ENCODE measurements at regions of chr10 and their contacts with region 1.

Region 1: DNA sequence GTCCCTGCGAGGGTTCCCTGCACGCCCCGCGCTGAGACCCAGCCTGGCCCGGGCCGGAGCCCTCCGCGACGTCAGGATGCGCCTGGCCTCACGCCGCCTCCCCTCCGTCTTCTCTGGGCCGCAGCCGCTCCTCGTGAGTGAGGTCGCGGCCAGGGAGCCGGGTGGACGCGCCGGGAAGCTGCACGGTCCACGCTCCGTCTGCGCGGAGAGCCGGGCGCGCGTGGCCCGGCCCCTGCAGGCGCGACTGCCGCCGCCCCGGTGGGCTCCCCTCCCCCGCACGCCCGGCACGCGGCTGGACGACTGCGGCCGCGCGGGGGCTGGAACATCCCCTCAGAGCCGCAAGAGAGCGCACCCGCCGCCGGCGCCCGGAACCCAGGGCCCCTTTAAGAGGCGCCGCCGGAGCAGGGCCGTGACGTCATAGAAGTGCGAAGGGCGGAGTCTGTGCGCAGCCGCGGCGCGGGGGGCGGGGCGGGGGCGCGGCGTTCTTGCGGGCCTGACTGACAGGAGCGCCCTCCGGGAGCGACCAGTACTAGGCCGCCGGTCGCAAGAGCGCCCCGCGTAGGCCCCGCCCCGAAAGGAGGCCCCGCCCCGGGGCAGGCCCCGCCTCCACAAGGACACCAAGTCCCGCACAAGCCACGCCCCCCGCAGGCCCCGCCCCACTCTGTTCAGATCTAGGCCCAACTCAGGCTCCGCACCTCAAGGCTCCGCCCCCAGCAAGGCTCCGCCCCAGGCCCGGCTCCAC is 445 bp upstream of the INPP5A start:
- DNase-seq: peak; percentile 100
- H3K4me3 Mint-ChIP-seq: peak overlapping the region; percentile 64
- H3K27ac Mint-ChIP-seq: no peak overlapping the region
- H3K4me1 Mint-ChIP-seq: peaks cover 49% of the 10 kb centered on the region
- H3K27me3 Mint-ChIP-seq: peaks cover 1% of the 10 kb centered on the region

Region 2: DNA sequence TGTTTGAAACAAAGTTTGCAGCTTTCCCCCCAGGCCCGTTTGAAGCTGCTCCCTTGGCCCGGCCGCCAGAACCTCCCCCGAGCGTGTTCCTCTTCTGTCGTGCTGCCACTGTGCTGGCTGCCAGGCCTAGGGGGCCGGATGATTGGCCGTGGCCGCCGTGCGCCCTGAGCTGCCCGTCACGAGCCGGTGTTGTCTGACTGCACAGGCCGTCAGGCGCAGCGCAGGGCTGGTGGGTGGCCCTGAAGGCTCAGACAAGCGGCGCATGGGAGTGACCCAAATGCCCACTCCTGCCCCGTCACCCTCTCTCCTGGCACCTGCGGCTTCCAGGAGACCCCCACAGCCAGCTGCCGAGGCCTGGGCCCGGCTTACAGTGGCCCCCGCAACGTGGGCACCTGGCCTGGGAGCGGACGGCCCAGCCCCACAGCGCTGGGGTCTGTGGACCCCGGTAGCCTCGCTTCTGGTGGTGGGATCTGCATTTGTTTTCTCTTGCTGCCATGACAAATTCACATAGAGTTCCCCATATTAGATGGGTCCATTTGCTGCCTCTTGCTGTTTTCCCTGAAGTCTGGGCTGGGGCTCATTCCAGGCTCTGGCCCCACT is 458.3 kb before region 1 on chr10:
- CTCF ChIA-PET with region 1: no interaction called
- intact Hi-C with region 1: no loop called
- DNase-seq: no peak
- H3K4me3 Mint-ChIP-seq: no peak overlapping the region
- H3K27ac Mint-ChIP-seq: no peak overlapping the region
- H3K4me1 Mint-ChIP-seq: no peaks in the 10 kb centered on the region
- H3K27me3 Mint-ChIP-seq: peaks cover 13% of the 10 kb centered on the region

Region 3: DNA sequence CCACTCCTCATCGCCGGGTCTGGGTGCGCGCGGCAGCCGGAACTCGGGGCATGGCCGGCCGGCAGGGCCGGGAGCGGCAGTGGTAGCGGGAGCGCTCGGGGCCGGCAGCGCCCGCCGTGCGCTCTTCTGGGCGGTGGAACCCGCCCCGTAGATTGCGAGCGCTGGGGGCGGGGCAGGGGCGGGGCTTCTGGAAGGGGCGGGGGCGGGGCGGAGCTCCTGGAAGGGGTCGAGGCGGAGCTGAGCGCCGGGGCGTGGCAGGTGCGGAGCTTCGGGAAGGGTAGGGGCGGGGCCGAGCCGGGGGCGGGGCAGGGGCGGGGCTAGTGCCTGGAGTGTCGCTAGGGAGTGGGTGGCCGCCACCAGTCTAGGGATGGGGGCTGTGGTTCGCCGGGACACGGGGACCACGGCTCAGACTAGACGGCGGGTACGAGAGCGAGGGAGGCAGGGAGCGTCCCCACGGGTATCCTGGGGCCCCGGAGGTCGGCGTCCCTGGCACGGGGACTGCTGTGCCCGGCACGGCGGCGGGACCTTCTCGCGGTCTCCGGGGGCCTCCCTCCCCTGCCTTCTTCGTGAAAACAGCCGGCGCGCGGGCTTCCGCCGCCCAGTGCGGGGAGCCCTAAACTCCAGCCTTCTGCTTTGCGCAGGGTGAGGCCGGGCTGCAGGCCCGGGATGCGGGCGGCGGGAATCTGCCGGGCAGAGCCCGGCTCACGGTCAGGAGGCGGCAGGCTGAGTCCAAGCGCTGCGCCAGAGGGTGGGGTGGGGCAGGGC is 229.1 kb before region 1 on chr10 and contains the start of gene STK32C:
- CTCF ChIA-PET with region 1: no interaction called
- intact Hi-C with region 1: loop called (anchors 1 kb)
- DNase-seq: peak; percentile 90
- H3K4me3 Mint-ChIP-seq: peak within 1 kb of the TSS; percentile 85
- H3K27ac Mint-ChIP-seq: no peak within 1 kb of the TSS
- H3K4me1 Mint-ChIP-seq: peaks cover 9% of the 10 kb centered on the region
- H3K27me3 Mint-ChIP-seq: peaks cover 2% of the 10 kb centered on the region
- total RNA-seq, gene STK32C: 16.5 to 16.6 TPM

Region 4: DNA sequence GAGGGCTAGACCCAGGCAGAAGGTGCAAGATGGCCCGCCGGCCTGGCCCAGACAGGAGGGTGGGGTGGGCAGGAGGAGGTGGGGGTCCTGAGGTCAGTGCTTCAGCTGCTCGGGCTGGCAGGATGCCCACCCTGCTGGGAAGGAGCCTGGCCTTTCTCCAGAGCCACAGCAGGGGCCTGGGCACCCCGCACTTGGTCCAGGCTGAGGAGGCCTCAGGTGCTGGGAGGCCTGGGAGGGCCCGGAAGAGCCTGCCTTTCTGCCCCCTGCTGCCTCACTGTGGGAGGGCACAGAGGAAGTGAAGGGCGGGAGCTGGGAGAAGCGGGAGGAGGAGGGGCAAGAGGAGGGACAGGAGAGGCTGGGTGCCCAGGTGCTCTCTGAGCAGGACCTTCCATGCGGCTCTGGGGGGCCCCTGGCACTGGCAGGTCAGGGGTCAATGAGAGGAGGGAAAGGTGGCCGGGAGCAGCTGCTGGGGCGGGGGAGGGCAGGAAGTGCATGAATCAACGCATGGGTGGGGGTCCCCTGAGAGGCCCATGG is 90.4 kb before region 1 on chr10:
- CTCF ChIA-PET with region 1: interaction called, 3 read pairs
- intact Hi-C with region 1: loop called (anchors 1 kb)
- DNase-seq: peak; percentile 93
- H3K4me3 Mint-ChIP-seq: peak overlapping the region; percentile 89
- H3K27ac Mint-ChIP-seq: peak overlapping the region; percentile 98
- H3K4me1 Mint-ChIP-seq: peaks cover 33% of the 10 kb centered on the region
- H3K27me3 Mint-ChIP-seq: no peaks in the 10 kb centered on the region

Region 5: DNA sequence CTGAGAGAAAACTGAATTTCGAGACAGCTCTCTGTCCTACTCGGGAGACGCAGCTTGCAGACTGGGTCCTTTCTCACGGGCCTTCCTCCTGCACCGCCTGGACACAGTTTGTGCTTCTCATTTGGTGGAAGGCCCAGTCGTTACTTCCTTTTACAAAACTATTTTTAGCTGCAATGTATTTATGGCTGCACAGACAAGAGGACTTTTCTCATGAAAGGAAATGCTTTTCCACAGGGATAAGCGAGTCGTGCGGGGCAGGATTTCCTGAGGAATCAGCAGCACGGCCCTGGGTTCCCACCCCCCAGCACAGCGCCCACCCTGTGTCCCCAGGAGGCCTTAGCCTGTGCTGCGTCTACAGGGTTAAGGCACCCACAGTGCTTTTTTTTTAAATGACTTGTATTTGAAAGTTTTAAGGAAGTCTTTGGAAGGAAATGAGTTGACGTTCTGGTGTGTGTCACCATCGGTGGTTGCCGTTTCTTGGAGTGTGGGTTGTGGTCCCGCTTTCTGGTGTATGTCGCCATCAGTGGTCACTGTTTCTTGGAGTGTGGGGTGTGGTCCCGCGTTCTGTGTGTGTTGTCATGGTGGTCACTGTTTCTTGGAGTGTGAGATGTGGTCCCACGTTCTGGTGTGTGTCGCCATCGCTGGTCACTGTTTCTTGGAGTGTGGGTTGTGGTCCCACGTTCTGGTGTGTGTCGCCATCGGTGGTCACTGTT is 51.3 kb after region 1 on chr10:
- CTCF ChIA-PET with region 1: no interaction called
- intact Hi-C with region 1: loop called (anchors 1 kb)
- DNase-seq: peak; percentile 79
- H3K4me3 Mint-ChIP-seq: peak overlapping the region; percentile 5
- H3K27ac Mint-ChIP-seq: peak overlapping the region; percentile 8
- H3K4me1 Mint-ChIP-seq: peaks cover 70% of the 10 kb centered on the region
- H3K27me3 Mint-ChIP-seq: no peaks in the 10 kb centered on the region

Region 6: GRCh38 chr10:132886211-132887099 is 349.3 kb after region 1 on chr10:
- CTCF ChIA-PET with region 1: no interaction called
- intact Hi-C with region 1: no loop called
- DNase-seq: no peak
- H3K4me3 Mint-ChIP-seq: no peak overlapping the region
- H3K27ac Mint-ChIP-seq: no peak overlapping the region
- H3K4me1 Mint-ChIP-seq: no peaks in the 10 kb centered on the region
- H3K27me3 Mint-ChIP-seq: peaks cover 3% of the 10 kb centered on the region

Region 7: DNA sequence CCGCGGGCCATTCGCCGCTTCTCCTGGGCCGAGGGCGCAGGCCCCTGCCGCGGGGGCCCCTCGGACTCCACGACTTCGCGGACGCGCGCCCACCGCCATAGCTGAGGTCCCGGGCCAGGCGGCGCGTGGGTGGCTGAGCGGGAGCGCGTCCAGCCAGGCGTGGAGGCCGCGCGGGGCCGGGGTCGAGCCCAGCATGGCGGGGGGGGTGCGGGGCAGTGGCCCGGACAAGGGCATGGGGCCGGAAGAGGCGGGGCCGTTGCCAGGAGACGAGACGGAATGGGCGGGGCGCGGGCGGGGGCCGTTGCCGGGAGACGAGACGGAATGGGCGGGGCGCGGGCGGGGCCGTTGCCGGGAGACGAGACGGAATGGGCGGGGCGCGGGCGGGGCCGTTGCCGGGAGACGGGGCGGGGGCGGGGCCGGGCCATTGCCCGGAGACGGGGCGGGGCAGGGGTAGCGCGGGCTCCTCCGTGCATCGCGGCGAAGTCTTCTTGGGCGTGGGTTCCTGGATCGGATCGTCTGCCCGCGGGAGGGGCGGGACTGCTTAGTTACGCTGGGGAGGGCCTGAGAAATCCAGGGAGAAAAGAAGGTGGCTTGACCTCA is 724.7 kb after region 1 on chr10:
- CTCF ChIA-PET with region 1: no interaction called
- intact Hi-C with region 1: loop called (anchors 5 kb)
- DNase-seq: peak; percentile 87
- H3K4me3 Mint-ChIP-seq: peak overlapping the region; percentile 82
- H3K27ac Mint-ChIP-seq: no peak overlapping the region
- H3K4me1 Mint-ChIP-seq: peaks cover 75% of the 10 kb centered on the region
- H3K27me3 Mint-ChIP-seq: no peaks in the 10 kb centered on the region

Measured in activated naive CD4-positive, alpha-beta T cell treated with anti-CD3 and anti-CD28 coated beads for 36 hours (primary cell).